Caco-2 (cell line): ENCODE measurements at regions of chr7 and their contacts with region 1.

Region 1: DNA sequence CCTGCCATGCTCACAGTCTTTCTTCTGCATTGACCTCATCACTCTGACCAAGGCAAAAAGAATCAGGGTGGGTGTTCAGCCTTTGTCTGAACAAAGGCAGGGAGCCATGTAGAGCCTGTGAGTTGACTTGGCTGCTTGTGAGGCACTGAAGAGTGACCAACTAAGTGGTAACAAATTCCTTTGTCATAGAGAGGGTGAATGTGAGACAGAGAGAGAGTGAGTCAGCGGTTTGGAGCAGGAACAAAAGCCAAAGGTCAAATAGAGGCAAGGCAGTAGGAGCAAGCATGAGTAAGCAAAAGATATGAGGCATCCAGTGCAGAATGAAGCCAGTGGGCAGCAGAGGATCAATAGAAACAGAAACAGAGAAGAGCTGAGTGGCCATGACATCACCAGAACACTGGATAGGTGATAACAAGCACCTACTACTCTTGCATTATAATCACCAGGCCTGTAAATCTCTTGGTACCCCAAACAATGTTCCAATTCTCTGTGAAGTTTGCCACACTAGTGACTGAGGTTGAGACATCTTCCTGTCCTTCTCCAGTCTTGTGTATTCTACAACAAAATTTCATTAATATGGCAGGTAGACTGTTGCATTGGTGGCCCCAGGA is 116.2 kb upstream of the LAMB4 start:
- DNase-seq: peak; percentile 78 to 89
- H3K4me3 ChIP-seq: no peak overlapping the region
- H3K4me3 Mint-ChIP-seq: peak overlapping the region; percentile 43
- H3K27ac Mint-ChIP-seq: peak overlapping the region; percentile 80
- H3K4me1 ChIP-seq: peaks cover 61% of the 10 kb centered on the region
- H3K4me1 Mint-ChIP-seq: peaks cover 44% of the 10 kb centered on the region
- H3K27me3 ChIP-seq: no peaks in the 10 kb centered on the region
- H3K27me3 Mint-ChIP-seq: no peaks in the 10 kb centered on the region
- CTCF ChIP-seq: peak in 1 of 2 experiments; percentile 29

Region 2: GRCh38 chr7:108235451-108236061 is 10.8 kb before region 1 on chr7:
- CTCF ChIA-PET with region 1: no interaction called
- POLR2A ChIA-PET with region 1: no interaction called
- intact Hi-C with region 1: loop called (anchors 1 kb)
- DNase-seq: peak; percentile 78 to 89
- H3K4me3 ChIP-seq: no peak overlapping the region
- H3K4me3 Mint-ChIP-seq: peak overlapping the region; percentile 40
- H3K27ac Mint-ChIP-seq: peak overlapping the region; percentile 81
- H3K4me1 ChIP-seq: peaks cover 59% of the 10 kb centered on the region
- H3K4me1 Mint-ChIP-seq: peaks cover 39% of the 10 kb centered on the region
- H3K27me3 ChIP-seq: no peaks in the 10 kb centered on the region
- H3K27me3 Mint-ChIP-seq: no peaks in the 10 kb centered on the region
- CTCF ChIP-seq: no peak

Region 3: DNA sequence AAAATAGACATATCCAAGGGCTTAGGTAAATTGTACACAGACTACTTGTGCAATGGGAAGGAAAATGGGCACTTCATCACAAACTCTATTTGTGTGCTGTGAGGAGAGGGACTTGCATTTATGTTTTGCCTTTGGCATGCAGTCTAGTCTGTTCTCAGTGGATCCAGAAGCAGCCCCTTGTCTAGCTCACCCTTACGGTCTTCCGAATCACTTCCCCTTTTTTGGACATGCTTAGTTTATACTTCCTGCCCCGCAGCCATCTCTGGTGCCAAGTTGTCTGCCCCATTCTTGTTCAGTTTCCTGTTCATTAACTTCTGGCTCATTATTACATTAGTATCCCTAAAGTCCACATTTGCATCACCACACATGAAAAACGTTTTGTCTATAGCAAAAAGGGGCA is 48.3 kb after region 1 on chr7:
- CTCF ChIA-PET with region 1: no interaction called
- POLR2A ChIA-PET with region 1: no interaction called
- intact Hi-C with region 1: loop called (anchors 5 kb)
- DNase-seq: no peak
- H3K4me3 ChIP-seq: no peak overlapping the region
- H3K4me3 Mint-ChIP-seq: no peak overlapping the region
- H3K27ac Mint-ChIP-seq: no peak overlapping the region
- H3K4me1 ChIP-seq: peaks cover 36% of the 10 kb centered on the region
- H3K4me1 Mint-ChIP-seq: peaks cover 37% of the 10 kb centered on the region
- H3K27me3 ChIP-seq: no peaks in the 10 kb centered on the region
- H3K27me3 Mint-ChIP-seq: no peaks in the 10 kb centered on the region
- CTCF ChIP-seq: no peak

Region 4: DNA sequence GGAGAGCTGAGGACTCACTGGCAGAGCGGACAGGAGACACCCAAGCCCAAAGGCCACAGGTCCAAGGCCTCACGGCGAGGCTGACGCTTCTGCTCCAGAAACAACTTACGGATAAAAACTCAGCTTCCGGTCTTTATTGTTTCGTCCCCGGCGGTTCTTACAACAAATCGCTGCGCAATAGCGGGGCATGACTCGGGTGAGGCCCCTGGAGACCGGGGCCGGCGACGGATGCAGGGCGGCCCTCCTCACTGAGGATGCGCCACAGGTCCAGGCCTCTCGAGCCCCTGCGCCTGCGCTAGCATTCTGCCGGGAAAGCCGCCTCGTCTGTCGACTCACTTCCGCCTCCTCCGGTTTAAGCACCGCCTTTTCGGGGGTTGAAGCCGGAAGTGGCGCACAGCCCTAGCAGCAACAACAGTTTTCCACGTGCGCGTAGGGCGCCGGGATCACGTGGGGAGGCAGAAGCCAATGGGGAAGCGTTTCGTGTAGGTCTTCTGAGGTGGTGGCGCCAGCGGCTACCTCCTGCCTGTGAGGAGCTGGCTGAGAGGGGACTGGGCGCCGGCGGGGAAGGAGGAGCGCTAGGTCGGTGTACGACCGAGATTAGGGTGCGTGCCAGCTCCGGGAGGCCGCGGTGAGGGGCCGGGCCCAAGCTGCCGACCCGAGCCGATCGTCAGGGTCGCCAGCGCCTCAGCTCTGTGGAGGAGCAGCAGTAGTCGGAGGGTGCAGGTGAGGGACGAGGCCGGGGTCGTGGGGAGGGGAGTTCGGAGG is 323.2 kb after region 1 on chr7 and contains the starts of genes DNAJB9 and THAP5:
- CTCF ChIA-PET with region 1: no interaction called
- POLR2A ChIA-PET with region 1: no interaction called
- intact Hi-C with region 1: loop called (anchors 5 kb)
- DNase-seq: peak; percentile 99 to 100
- H3K4me3 ChIP-seq: peak within 1 kb of the TSS; percentile 93
- H3K4me3 Mint-ChIP-seq: peak within 1 kb of the TSS; percentile 98
- H3K27ac Mint-ChIP-seq: peak within 1 kb of the TSS; percentile 98
- H3K4me1 ChIP-seq: no peaks in the 10 kb centered on the region; the same call in 1 of the 2 replicates
- H3K4me1 Mint-ChIP-seq: no peaks in the 10 kb centered on the region
- H3K27me3 ChIP-seq: no peaks in the 10 kb centered on the region
- H3K27me3 Mint-ChIP-seq: no peaks in the 10 kb centered on the region
- CTCF ChIP-seq: no peak
- total RNA-seq, gene DNAJB9: 22.0 and 22.1 TPM in 2 replicates
- total RNA-seq, gene THAP5: 18.3 and 20.4 TPM in 2 replicates